ENCODE measurements at regions of chr2 and their contacts with region 1.

Region 1: DNA sequence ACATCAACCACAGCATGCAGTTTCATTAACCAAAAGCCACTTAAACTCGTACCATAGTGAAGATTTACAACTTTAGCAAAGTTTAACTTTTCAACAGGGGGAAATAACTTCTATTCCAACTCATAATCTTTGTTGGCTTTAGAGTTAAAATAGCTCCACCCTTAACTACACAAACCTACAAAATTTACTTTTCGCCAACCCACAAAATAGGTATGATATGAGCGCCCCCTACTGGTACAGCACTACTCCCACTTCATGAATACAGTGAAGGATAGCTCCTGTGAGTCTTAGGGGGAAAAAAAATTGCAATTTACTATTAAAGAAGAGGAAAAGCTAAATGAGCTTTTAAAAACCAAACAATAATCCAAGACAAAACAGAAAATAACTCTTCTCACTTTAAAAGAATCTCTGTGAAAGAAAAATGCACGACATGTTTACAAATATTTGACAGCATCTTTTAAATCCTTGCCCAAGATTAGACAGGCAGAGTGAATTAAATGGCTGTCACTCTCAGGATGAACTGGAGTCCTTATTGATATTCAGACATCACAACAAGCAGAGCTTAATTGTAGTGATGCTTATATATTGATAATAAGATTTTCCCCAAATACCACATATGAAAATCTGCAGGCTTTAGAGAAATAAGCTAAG is 32.2 kb downstream of the TMEFF2 start:
- DNase-seq: peak; percentile 0
- H3K4me3 ChIP-seq: peak overlapping the region in 1 of 4 donors; percentile 29
- H3K27ac ChIP-seq: peak overlapping the region in 1 of 4 donors; percentile 27
- H3K4me1 ChIP-seq: peaks cover 0 to 9% (median 0%) of the 10 kb centered on the region in 3 donors
- H3K27me3 ChIP-seq: peaks cover 0 to 3% (median 0%) of the 10 kb centered on the region in 4 donors
- CTCF ChIP-seq: peak; percentile 84 to 96 (median 90)
- POLR2A ChIP-seq: no peak

Region 2: DNA sequence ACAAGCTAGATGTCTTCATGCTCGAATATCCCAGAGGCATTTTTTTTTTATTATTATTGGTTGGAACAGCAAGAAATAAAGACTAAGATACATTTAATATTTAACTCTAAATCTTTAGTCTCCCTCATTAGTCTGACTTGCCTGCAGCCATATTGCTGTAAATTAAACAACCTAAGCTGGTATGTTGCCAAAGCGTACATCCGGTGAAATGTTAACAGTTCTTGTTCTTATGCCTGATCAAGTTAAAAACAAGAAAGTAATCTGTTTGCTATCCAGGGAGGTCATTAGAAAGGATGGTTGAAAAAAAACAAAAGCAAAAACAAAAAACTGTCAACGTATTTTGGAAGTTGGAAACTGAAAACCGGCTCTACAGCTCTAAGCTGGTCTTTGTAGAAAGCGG is 610.5 kb before region 1 on chr2:
- intact Hi-C with region 1: loop called (anchors 5 kb)
- DNase-seq: no peak
- H3K4me3 ChIP-seq: peak overlapping the region in 1 of 4 donors; percentile 16
- H3K27ac ChIP-seq: no peak overlapping the region
- H3K4me1 ChIP-seq: peaks cover 0 to 26% (median 0%) of the 10 kb centered on the region in 3 donors
- H3K27me3 ChIP-seq: peaks cover 0 to 9% (median 0%) of the 10 kb centered on the region in 4 donors
- CTCF ChIP-seq: no peak
- POLR2A ChIP-seq: no peak

Region 3: GRCh38 chr2:191811807-191812602 is 350.5 kb before region 1 on chr2:
- intact Hi-C with region 1: loop called (anchors 2 kb)
- DNase-seq: no peak
- H3K4me3 ChIP-seq: peak overlapping the region in 1 of 4 donors; percentile 38
- H3K27ac ChIP-seq: no peak overlapping the region
- H3K4me1 ChIP-seq: peaks cover 0 to 8% (median 0%) of the 10 kb centered on the region in 3 donors
- H3K27me3 ChIP-seq: no peaks in the 10 kb centered on the region
- CTCF ChIP-seq: peak; percentile 42 to 83 (median 74)
- POLR2A ChIP-seq: no peak

Region 4: GRCh38 chr2:192286093-192286701 is 123.7 kb after region 1 on chr2:
- intact Hi-C with region 1: no loop called
- DNase-seq: no peak
- H3K4me3 ChIP-seq: no peak overlapping the region
- H3K27ac ChIP-seq: no peak overlapping the region
- H3K4me1 ChIP-seq: no peaks in the 10 kb centered on the region
- H3K27me3 ChIP-seq: no peaks in the 10 kb centered on the region
- CTCF ChIP-seq: peak in 1 of 6 experiments; percentile 22
- POLR2A ChIP-seq: no peak